K562 (cell line): ENCODE measurements at regions of chr4 and their contacts with region 1.

Region 1: DNA sequence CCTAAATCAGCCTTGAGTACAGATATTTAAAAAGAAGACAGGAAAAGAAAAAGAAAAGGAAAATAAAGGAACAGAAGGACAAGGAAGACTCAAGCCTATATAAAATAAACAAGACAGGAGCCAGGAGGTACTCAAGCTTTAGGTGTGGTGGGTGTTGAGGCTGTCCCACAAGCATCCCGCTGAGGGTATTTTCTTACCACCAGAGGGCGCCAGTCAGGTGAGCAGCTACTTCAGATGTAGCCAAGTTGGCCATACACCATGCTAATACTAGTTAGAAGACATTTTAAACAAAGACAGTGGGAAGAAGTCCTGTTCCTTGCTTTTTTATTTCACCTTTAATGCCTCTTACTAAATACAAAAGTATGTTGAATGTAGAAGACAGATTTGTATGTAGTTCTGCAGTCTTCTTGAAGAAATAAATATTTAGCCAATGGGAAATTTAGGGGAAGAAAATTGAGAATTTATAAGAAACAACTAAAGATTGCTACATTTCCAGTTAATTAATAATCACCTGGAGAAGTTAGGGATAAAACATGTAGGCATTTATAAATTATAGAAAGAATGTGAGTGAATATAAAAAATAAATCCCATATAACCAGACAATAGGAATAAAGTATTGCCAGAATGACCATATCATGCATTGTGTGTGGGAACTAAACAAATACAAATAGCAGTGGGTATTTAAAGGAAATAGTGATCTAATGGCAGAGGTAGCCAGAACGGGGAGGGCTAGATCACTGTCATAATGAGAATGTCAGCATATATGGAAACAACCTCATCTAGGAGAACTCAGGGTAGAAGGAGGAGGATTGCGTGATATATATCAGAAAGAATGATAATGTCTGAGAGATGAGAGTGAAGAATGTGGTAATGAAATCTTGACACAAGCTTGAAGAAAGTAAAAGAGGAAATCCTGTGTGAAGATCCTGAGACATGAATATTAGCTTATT is 71.0 kb downstream of the MTHFD2L start:
- DNase-seq: peak; percentile 59 to 87 (median 70)
- ATAC-seq: peak; percentile 99
- H3K4me3 ChIP-seq: no peak overlapping the region
- H3K27ac ChIP-seq: no peak overlapping the region
- H3K4me1 ChIP-seq: peaks cover 0 to 6% of the 10 kb centered on the region in 2 experiments; a peak in 2 of 5 replicates
- H3K27me3 ChIP-seq: no peaks in the 10 kb centered on the region
- CTCF ChIP-seq: peak; percentile 83 to 89 (median 86)
- EP300 ChIP-seq: no peak
- POLR2A ChIP-seq: no peak
- RAD21 ChIP-seq: peak; percentile 68 to 82

Region 2: GRCh38 chr4:74189331-74190043 is 39.5 kb before region 1 on chr4:
- CTCF ChIA-PET with region 1: no interaction called
- POLR2A ChIA-PET with region 1: no interaction called
- in situ Hi-C with region 1: no loop called
- intact Hi-C with region 1: loop called (anchors 2 kb)
- DNase-seq: peak; percentile 33 to 70 (median 42)
- ATAC-seq: peak; percentile 67
- H3K4me3 ChIP-seq: no peak overlapping the region
- H3K27ac ChIP-seq: no peak overlapping the region
- H3K4me1 ChIP-seq: no peaks in the 10 kb centered on the region
- H3K27me3 ChIP-seq: no peaks in the 10 kb centered on the region
- CTCF ChIP-seq: peak; percentile 46 to 75 (median 55); a peak in 5 of 6 replicates
- EP300 ChIP-seq: no peak
- POLR2A ChIP-seq: no peak
- RAD21 ChIP-seq: peak; percentile 67 to 69

Region 3: GRCh38 chr4:74311696-74312313 is 82.8 kb after region 1 on chr4:
- CTCF ChIA-PET with region 1: interaction called, 23 read pairs
- POLR2A ChIA-PET with region 1: no interaction called
- in situ Hi-C with region 1: no loop called
- intact Hi-C with region 1: loop called (anchors 1 kb)
- DNase-seq: peak in 1 of 4 experiments; percentile 67
- ATAC-seq: peak; percentile 76
- H3K4me3 ChIP-seq: no peak overlapping the region
- H3K27ac ChIP-seq: no peak overlapping the region
- H3K4me1 ChIP-seq: no peaks in the 10 kb centered on the region; a peak in 1 of 5 replicates
- H3K27me3 ChIP-seq: no peaks in the 10 kb centered on the region
- CTCF ChIP-seq: peak; percentile 50 to 81 (median 59); a peak in 5 of 6 replicates
- EP300 ChIP-seq: no peak
- POLR2A ChIP-seq: no peak
- RAD21 ChIP-seq: peak; percentile 78 to 83

Region 4: GRCh38 chr4:74370912-74371311 is 141.9 kb after region 1 on chr4:
- CTCF ChIA-PET with region 1: no interaction called
- POLR2A ChIA-PET with region 1: no interaction called
- in situ Hi-C with region 1: no loop called
- intact Hi-C with region 1: loop called (anchors 10 kb)
- DNase-seq: peak; percentile 23 to 85 (median 44)
- ATAC-seq: peak; percentile 84
- H3K4me3 ChIP-seq: no peak overlapping the region
- H3K27ac ChIP-seq: peak overlapping the region; percentile 37; the same call in 1 of the 3 replicates
- H3K4me1 ChIP-seq: peaks cover 0 to 15% of the 10 kb centered on the region in 2 experiments; a peak in 2 of 5 replicates
- H3K27me3 ChIP-seq: no peaks in the 10 kb centered on the region
- CTCF ChIP-seq: peak; percentile 82 to 85 (median 82)
- EP300 ChIP-seq: no peak
- POLR2A ChIP-seq: no peak
- RAD21 ChIP-seq: peak; percentile 78 to 81

Region 5: GRCh38 chr4:74623041-74623440 is 394.1 kb after region 1 on chr4:
- CTCF ChIA-PET with region 1: no interaction called
- POLR2A ChIA-PET with region 1: no interaction called
- in situ Hi-C with region 1: no loop called
- intact Hi-C with region 1: loop called (anchors 2 kb)
- DNase-seq: peak; percentile 53 to 77 (median 59)
- ATAC-seq: peak; percentile 95
- H3K4me3 ChIP-seq: no peak overlapping the region
- H3K27ac ChIP-seq: no peak overlapping the region
- H3K4me1 ChIP-seq: peaks cover 0 to 8% of the 10 kb centered on the region in 2 experiments; a peak in 2 of 5 replicates
- H3K27me3 ChIP-seq: no peaks in the 10 kb centered on the region
- CTCF ChIP-seq: peak; percentile 73 to 79 (median 76)
- EP300 ChIP-seq: no peak
- POLR2A ChIP-seq: no peak
- RAD21 ChIP-seq: peak; percentile 88 to 90